OCI-LY7 (cell line): ENCODE measurements at regions of chr3 and their contacts with region 1.

Region 1: DNA sequence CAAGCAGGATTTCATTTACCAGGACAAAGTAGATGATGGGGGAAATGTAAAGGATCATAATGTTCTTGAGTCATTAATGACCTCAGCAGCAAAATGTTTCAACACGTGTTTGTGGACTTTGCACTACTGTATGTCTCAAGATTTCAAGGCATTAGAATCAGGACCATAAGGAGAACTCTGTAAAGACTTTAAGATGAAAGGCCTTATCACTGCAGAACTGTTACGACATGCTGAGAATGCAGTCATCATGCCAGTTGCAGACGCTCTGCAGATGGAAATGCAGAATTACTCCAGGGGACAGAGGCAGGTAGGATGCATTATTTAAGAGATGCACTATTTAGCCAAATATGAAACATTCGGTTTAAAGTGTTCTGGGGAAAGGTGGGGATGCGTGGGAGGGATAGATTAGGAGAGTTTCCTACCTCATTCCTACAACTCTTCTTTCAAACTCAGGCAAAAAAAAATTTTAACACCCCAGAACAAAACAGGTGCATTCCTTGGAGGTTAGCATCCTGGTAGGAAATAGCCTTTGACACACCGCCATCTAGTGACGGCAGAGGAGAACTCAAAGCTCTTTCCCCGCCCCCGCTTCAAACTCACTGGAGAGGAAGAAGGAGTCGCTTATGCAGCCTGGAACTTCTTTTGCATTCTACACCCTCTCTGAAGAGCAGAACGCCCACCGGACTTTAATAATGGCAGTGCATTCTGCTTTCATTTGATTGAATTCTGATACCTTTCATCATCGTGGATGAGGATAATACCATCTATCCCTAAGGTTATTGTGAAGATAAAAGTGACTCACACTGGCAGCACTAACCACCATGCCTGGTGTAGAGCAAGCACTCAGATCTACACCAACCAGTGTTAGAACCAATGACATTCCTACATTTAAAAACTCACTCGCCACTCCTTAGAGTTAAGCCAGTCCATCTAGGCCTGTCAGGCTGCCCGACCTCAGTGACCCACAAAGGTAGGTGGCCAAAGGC is 43.1 kb upstream of the TOPAZ1 start:
- DNase-seq: peak; percentile 79
- H3K4me3 ChIP-seq: no peak overlapping the region
- H3K27ac ChIP-seq: no peak overlapping the region
- H3K4me1 ChIP-seq: no peaks in the 10 kb centered on the region
- CTCF ChIP-seq: peak; percentile 91

Region 2: DNA sequence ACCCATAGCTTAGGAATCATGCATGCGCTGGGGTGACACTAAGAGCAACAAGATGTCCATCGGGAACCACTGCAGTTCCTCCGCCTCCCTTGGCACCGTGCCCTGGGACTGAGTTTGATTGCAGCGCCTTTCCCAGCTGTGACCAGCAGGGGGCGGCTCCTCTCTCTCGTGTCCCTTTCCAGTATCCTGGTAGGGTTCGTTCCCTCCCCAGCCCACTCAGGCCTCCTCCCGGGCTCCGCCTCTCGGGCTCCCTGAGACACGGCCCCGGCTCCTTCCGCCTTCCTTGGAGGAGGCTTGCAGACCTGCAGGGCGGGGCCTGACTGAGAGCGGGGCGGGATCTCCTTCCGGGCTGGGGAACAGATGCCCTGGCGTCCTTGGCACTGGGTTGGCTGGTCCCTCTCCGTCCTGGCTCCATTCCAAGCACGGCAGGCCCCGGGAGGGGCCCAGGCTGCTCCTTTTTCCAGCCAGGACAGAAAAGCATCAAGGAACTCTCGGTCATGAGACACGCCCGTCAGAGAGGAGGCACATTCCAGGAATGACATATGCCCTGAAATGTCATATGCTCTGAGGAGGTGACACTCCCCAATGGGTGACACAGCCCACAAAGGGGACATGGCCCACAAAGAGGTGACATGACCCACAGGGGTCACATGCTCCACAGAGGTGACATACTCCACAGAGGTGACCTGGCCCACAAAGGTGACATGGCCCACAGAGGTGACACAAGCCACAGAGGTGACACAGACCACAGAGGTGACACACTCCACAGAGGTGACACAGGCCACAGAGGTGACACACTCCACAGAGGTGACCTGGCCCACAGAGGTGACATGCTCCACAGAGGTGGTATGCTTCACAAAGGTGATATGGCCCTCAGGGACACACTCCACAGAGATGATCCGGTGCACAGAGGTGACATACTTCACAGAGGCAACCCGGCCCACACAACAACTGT is 428.8 kb before region 1 on chr3:
- CTCF ChIA-PET with region 1: no interaction called
- POLR2A ChIA-PET with region 1: no interaction called
- intact Hi-C with region 1: loop called (anchors 1 kb)
- DNase-seq: peak; percentile 59
- H3K4me3 ChIP-seq: no peak overlapping the region
- H3K27ac ChIP-seq: no peak overlapping the region
- H3K4me1 ChIP-seq: no peaks in the 10 kb centered on the region
- CTCF ChIP-seq: peak; percentile 82

Region 3: GRCh38 chr3:43855674-43856299 is 342.8 kb before region 1 on chr3:
- CTCF ChIA-PET with region 1: interaction called, 5 read pairs
- POLR2A ChIA-PET with region 1: no interaction called
- intact Hi-C with region 1: loop called (anchors 1 kb)
- DNase-seq: peak; percentile 80
- H3K4me3 ChIP-seq: no peak overlapping the region
- H3K27ac ChIP-seq: no peak overlapping the region
- H3K4me1 ChIP-seq: peaks cover 4% of the 10 kb centered on the region
- CTCF ChIP-seq: peak; percentile 91

Region 4: DNA sequence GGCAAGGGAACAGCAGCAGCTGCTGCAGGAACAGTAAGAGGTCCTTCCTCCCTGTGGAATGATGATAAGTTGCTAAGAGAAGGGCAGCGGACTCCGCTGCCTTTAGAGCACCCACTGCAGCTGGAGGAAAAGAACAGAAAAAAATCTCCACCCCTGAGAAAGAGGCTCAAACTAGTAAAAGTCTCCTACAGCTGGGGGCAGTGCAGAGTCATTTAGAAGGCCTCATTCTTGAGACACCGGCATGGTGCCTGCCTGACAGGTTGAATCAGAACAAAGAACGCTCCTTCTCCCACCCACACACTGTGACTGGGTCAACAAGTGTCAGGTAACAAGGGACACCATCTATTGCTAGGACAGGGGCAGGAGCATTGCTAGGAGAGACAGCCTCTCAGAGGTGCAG is 319.4 kb before region 1 on chr3:
- CTCF ChIA-PET with region 1: no interaction called
- POLR2A ChIA-PET with region 1: no interaction called
- intact Hi-C with region 1: loop called (anchors 5 kb)
- DNase-seq: peak; percentile 73
- H3K4me3 ChIP-seq: no peak overlapping the region
- H3K27ac ChIP-seq: no peak overlapping the region
- H3K4me1 ChIP-seq: peaks cover 22% of the 10 kb centered on the region
- CTCF ChIP-seq: peak; percentile 81

Region 5: DNA sequence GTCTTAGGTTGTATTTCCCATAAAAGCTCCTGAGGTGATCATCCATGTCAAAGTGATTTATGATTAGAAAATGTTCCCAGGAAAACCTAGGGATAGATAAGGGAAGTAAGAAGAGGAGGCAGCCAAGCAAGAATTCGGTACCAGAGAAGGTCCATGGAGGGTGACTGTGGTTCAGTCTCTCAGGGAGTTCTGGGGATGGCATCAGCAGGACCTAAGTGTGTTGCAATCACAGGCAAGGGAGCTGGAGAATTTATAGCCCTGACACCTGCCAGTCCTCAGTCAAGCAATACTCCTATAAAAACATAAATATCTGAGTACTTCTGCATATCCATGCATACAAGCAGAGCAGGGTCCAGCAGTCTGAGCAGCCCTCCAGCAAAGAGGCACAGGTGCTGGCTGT is 52.5 kb before region 1 on chr3:
- CTCF ChIA-PET with region 1: no interaction called
- POLR2A ChIA-PET with region 1: no interaction called
- intact Hi-C with region 1: no loop called
- DNase-seq: no peak
- H3K4me3 ChIP-seq: no peak overlapping the region
- H3K27ac ChIP-seq: no peak overlapping the region
- H3K4me1 ChIP-seq: no peaks in the 10 kb centered on the region
- CTCF ChIP-seq: no peak